ENCODE measurements at regions of chr12 and their contacts with region 1.

Region 1: DNA sequence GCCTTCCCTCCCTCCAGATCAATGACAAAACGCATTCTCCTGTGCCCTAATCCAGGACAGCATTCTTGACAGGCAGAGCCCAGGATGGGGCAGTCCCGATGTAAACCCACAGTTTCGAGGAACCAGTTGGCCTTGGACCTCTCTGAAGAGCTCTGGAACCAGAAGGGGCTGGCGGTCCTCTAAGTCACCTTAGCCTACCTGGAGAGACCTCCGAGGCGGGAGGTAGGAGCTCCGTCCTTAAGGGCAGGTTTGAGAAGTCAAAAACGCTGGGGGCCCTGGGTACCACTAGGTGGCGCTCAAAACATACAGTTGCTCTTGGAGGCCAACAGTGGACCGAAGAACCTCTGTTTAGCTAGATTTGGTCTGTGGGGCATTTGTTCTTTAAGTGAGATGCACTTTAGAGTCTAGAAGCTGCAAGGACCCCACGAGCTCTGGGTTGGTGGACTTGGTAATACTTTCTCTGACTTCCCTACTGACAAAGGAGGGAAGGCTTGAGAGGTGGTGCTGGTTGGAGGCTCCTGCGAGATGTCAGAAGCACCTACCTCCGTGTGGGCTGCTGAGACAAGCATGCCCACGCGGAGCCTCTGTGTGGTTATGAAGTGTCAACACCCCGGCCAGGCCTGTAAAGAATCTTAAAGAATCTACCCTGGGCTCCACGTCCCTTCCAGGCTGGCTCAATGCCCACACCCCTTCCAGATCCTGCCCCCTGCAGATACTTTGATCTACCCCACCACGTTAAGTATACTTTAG is 74.8 kb upstream of the CHST11 start:
- DNase-seq: peak in 1 of 2 donors; percentile 91
- H3K4me3 ChIP-seq: no peak overlapping the region
- H3K27ac ChIP-seq: no peak overlapping the region
- H3K4me1 ChIP-seq: no peaks in the 10 kb centered on the region
- H3K27me3 ChIP-seq: no peaks in the 10 kb centered on the region
- CTCF ChIP-seq: peak; percentile 91 to 99 (median 91)
- POLR2A ChIP-seq: no peak

Region 2: GRCh38 chr12:104877123-104877705 is 495.3 kb after region 1 on chr12:
- intact Hi-C with region 1: loop called (anchors 5 kb)
- DNase-seq: no peak
- H3K4me3 ChIP-seq: no peak overlapping the region
- H3K27ac ChIP-seq: no peak overlapping the region
- H3K4me1 ChIP-seq: no peaks in the 10 kb centered on the region
- H3K27me3 ChIP-seq: no peaks in the 10 kb centered on the region
- CTCF ChIP-seq: peak; percentile 41 to 82 (median 42)
- POLR2A ChIP-seq: no peak